ENCODE measurements at regions of chr3 and their contacts with region 1.

Region 1: GRCh38 chr3:17023006-17023664 is 138.4 kb downstream of the PLCL2 start:
- DNase-seq: no peak
- H3K4me3 ChIP-seq: no peak overlapping the region
- H3K27ac ChIP-seq: no peak overlapping the region
- H3K27me3 ChIP-seq: no peaks in the 10 kb centered on the region
- CTCF ChIP-seq: no peak

Region 2: DNA sequence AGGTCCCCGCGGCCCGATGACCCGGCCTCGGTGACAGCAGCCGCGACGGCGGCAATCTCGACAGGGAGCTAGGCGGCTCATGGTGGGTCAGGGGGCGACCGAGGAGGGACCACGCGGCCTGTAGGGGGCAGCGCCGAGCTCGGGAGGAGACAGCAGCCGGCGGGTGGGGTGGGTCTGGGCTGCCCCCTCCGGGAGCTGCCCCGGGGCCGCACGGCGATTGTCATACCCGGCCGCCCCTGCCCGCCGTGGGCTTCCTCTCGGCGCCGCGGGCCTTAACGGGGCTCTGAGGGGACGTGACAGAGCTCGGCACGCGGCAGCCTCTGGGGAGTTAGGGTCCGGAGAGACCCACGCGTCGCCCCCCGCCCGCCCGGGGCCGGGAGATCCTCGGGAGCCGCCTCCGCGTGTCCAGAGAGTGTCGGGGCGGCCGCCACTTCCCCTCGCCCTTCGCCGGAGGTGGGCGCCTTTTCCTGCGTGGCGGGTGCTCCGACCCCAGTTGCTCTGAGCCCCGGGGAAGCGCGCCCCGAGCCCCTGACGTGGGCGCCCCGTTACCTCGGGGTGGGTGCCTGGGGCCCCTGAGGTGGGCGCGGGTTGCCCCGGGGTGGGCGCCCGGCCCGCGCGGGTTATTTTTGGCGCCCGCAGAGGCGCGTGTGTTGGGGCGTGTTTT is 138.9 kb before region 1 on chr3:
- intact Hi-C with region 1: loop called in 1 of 2 experiments (anchors 10 kb)
- DNase-seq: peak in 5 of 10 donors; percentile 47 to 60 (median 53)
- H3K4me3 ChIP-seq: peak overlapping the region; percentile 42 to 93 (median 84)
- H3K27ac ChIP-seq: peak overlapping the region; percentile 18 to 99 (median 95)
- H3K27me3 ChIP-seq: no peaks in the 10 kb centered on the region
- CTCF ChIP-seq: peak in 53 of 56 donors; percentile 31 to 66 (median 53)

Measured in dorsolateral prefrontal cortex (tissue), 120 donors.